ENCODE measurements at regions of chr6 and their contacts with region 1.

Region 1: DNA sequence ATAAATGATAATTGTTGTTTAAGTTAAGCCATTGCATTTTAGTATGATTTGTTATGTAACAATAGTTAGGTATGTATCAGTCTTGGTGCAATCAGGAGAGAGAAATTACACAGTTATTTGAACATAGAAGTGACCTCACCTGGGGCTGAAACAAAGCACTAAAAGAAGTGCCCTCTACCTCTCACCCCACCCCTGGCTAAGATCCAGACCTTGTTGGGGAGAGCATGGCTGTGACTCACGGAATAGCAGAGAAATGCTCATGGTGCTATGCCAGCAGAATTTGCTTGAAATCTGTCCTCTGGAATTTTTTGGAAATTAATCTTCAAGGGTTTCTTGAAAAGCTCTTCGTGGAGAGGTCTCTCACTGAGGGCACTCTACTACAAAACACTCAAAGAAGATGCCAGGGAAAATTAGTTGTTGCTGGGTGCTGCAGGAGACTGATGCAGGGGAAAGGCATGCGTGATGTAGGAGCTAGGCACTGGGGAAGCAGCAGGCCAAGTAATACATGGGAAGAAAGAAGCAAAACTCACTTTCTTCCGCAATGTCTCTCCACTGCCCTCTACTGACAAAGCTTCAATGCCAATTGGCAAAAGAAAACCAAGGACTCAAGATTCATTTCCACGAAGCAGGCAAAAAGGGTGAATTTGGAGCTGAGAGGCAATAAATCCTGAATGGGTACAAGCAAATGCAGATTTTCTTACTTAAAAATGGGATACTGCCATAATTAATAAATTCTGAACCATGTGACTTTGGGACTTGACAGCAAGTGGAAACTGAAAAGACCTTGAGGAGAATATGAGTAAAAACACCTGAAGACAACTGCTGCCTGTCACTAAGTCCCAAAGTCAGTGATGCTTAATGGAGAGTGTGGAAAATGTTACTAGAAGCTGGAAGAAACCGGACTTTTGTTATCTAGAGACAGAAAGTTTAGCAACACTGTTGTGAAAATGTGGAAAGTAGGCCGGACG is 136.3 kb upstream of the ZNF184 start:
- DNase-seq: peak; percentile 91
- ATAC-seq: no peak
- H3K4me3 ChIP-seq: no peak overlapping the region
- H3K27ac ChIP-seq: no peak overlapping the region
- H3K4me1 ChIP-seq: no peaks in the 10 kb centered on the region
- H3K27me3 ChIP-seq: no peaks in the 10 kb centered on the region
- CTCF ChIP-seq: peak; percentile 96

Region 2: DNA sequence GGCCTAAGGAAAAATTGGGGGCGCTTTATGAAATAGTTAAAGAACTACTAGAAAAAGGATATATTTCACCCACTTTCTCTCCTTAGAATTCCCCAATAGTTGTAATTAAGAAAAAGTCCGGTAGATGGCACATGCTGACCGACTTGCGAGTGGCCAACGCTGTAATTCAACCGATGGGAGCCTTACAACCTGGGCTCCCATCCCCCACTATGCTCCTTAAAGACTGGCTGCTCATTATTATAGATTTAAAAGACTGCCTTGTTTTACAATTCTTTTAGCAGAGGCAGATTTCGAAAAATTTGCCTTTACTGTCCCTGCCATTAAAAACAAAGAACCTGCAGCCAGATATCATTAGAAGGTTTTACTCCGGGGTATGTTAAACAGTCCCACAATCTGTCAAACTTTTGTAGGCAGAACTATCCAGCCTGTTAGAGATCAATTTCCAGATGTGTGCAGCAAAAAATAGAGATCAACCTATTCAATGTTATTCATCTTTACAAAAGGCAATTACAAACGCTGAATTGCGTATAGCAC is 420.2 kb before region 1 on chr6:
- CTCF ChIA-PET with region 1: no interaction called
- POLR2A ChIA-PET with region 1: no interaction called
- in situ Hi-C with region 1: no loop called
- intact Hi-C with region 1: loop called (anchors 10 kb)
- DNase-seq: no peak
- ATAC-seq: peak; percentile 93
- H3K4me3 ChIP-seq: peak overlapping the region; percentile 81 to 91
- H3K27ac ChIP-seq: peak overlapping the region; percentile 87
- H3K4me1 ChIP-seq: peaks cover 3% of the 10 kb centered on the region; the same call in 1 of the 2 replicates
- H3K27me3 ChIP-seq: no peaks in the 10 kb centered on the region
- CTCF ChIP-seq: peak; percentile 90

Region 3: DNA sequence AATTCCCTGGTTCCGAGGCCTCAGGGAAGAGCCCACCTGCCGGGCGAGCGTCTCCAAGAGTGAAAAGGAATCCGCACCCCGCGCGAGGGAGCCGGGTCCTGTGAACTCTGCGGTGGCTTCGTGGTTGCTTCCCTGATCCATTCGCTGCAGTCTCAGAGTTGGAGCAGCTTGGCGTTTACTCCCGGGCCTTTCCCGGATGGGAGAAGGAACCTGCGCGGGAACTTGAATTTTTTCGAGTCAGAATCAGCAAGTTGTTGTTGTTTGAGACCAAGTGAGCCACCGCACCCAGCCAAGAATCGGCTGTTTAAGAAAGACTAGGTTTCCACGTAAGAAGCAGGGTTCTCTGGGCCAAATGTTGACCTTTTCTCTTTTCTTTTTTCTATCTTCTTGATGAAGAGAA is 348.8 kb before region 1 on chr6:
- CTCF ChIA-PET with region 1: no interaction called
- POLR2A ChIA-PET with region 1: no interaction called
- in situ Hi-C with region 1: no loop called
- intact Hi-C with region 1: no loop called
- DNase-seq: no peak
- ATAC-seq: no peak
- H3K4me3 ChIP-seq: no peak overlapping the region
- H3K27ac ChIP-seq: no peak overlapping the region
- H3K4me1 ChIP-seq: no peaks in the 10 kb centered on the region
- H3K27me3 ChIP-seq: no peaks in the 10 kb centered on the region; the same call in 1 of the 2 replicates
- CTCF ChIP-seq: no peak

Region 4: DNA sequence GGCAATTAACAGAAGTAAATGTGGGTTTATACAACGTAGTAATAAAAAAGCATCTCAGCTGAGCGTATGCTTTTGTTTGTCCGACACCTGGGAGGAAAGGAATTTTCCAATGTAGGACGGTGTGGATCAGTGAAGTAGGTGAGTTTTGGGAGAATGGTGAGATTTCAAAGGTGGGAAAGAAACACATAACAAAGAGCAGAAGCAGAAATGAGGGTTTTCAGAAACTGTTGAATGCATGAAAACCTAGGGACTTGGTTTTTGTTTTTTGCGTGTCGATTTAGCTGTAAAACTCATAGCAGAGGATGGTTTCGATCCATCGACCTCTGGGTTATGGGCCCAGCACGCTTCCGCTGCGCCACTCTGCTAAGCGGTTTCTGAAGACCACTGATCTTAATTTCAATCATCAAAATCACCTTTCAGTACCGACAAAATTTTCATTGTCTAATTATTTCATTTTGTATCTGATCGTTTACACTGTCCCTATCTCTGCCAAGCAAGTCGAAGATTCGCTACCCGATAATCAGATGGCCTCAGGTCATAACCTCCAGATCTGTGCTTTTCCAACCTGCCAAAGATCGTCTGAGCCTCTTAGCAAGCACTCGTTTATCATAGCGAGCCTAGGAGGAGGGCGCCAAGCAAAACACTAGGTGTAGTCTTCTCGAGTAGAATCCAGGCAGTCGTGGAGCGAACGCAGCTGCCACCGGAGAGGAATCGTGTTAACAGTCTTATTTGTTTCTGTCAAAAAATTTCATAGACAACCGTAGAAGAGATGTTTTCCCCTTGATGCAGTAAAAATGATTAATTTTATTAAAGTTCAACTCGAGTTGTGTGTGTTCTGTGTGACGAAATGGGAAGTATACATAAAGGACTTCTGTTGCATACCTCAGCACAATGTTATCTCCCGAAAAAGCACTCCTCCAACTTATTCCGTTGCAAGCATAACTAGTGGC is 276.2 kb before region 1 on chr6:
- CTCF ChIA-PET with region 1: no interaction called
- POLR2A ChIA-PET with region 1: no interaction called
- in situ Hi-C with region 1: no loop called
- intact Hi-C with region 1: loop called (anchors 10 kb)
- DNase-seq: peak; percentile 92
- ATAC-seq: peak; percentile 91
- H3K4me3 ChIP-seq: peak overlapping the region; percentile 75 to 87
- H3K27ac ChIP-seq: peak overlapping the region; percentile 37; the same call in 1 of the 2 replicates
- H3K4me1 ChIP-seq: no peaks in the 10 kb centered on the region
- H3K27me3 ChIP-seq: no peaks in the 10 kb centered on the region
- CTCF ChIP-seq: no peak

Region 5: DNA sequence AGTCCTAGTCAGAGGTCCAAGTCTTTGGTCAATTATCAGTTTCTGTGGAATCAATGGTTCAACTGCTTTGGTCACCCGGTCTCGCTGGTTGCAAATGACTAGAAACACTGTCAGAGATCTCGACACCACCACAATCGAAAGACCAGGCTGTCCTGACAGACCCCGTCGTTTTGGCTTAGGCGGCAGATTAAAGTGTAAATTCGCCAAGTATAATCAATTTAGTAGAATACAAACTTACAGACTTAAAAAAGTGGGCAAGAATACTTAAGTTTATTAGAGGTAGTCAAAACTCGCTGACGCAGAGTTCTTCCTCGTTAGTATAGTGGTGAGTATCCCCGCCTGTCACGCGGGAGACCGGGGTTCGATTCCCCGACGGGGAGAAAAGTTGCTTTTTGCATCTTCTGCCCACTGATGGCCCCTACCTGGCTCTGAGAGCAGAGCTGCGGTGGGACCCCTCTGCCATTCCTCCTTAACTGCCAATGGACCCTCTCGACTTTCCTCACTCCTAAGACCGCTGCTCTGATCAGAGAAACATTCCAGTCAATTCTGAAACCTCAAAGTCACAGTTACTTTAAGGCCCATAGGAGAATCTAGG is 105.7 kb before region 1 on chr6:
- CTCF ChIA-PET with region 1: interaction called, 10 read pairs
- POLR2A ChIA-PET with region 1: no interaction called
- in situ Hi-C with region 1: no loop called
- intact Hi-C with region 1: no loop called
- DNase-seq: peak; percentile 88
- ATAC-seq: peak; percentile 61
- H3K4me3 ChIP-seq: peak overlapping the region; percentile 67 to 74
- H3K27ac ChIP-seq: peak overlapping the region; percentile 64
- H3K4me1 ChIP-seq: peaks cover 32% of the 10 kb centered on the region
- H3K27me3 ChIP-seq: peaks cover 2% of the 10 kb centered on the region; the same call in 1 of the 2 replicates
- CTCF ChIP-seq: no peak

Region 6: GRCh38 chr6:27582928-27583725 is 26.1 kb before region 1 on chr6:
- CTCF ChIA-PET with region 1: no interaction called
- POLR2A ChIA-PET with region 1: no interaction called
- in situ Hi-C with region 1: no loop called
- intact Hi-C with region 1: no loop called
- DNase-seq: peak; percentile 67
- ATAC-seq: peak; percentile 98
- H3K4me3 ChIP-seq: peak overlapping the region; percentile 51 to 65
- H3K27ac ChIP-seq: no peak overlapping the region; the same call in 1 of the 2 replicates
- H3K4me1 ChIP-seq: peaks cover 7% of the 10 kb centered on the region; the same call in 1 of the 2 replicates
- H3K27me3 ChIP-seq: no peaks in the 10 kb centered on the region; the same call in 1 of the 2 replicates
- CTCF ChIP-seq: no peak

Region 7: DNA sequence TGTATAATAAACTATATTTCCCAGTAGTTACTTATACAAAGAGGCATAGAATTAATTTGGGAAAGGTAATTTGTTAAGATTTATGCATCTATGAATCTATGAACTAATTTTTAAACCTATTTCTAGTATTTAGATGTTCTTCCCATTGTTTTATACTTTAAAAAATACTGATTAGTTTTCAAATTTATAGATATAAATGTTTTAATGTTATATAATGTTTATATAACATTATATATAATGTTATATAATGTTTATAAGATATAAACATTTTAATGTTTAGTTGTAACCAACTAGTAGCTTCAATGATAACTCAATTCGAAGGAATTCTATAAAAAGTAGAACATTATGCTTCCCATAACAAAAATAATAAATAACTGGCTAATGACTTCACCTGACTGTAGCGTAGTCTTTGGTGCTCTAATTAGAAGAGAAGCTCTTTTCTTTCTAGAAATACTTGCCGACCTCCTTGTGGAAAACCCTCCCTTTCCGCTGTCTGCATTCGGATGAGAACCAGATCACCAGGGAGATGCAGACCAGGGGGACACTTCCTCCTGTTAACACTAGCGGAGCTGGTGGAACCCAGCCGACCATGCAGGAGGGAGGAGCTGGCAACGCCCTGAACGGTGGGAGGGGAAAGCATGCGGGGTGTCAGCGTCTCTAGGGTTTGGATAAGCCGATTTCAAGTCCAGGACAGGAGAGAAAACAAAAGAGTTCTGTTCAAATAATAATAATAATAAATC is 144.6 kb after region 1 on chr6:
- CTCF ChIA-PET with region 1: no interaction called
- POLR2A ChIA-PET with region 1: no interaction called
- in situ Hi-C with region 1: no loop called
- intact Hi-C with region 1: loop called (anchors 5 kb)
- DNase-seq: peak; percentile 66
- ATAC-seq: peak; percentile 91
- H3K4me3 ChIP-seq: peak overlapping the region; percentile 98 to 99
- H3K27ac ChIP-seq: peak overlapping the region; percentile 48
- H3K4me1 ChIP-seq: peaks cover 6% of the 10 kb centered on the region; the same call in 1 of the 2 replicates
- H3K27me3 ChIP-seq: no peaks in the 10 kb centered on the region
- CTCF ChIP-seq: peak; percentile 12; the same call in 1 of the 2 replicates

Measured in Panc1 (cell line).